ENCODE measurements at regions of chr14 and their contacts with region 1.

Region 1: GRCh38 chr14:74955229-74956026 is at the start of gene PGF:
- DNase-seq: peak; percentile 90
- total RNA-seq, gene PGF: 9.4 TPM

Region 2: DNA sequence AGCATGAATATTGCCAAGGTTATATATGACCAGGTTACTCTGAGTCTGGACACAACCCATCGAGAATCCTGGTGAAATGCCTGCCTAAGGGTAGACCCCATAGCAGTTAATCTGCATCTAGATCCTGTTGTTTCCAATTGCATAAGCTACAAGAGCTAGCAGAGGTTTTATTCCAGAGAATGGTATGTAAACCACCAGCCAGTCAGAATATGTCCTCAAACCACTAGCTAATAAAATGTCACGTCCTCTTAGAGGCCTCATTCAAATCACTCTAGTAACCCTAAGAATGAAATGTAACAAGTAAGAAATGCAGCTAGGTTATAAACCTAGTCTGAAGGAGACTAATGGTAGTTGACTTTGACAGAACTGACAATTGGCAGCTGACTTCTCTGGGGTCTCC is 201.3 kb before region 1 on chr14:
- intact Hi-C with region 1: no loop called
- DNase-seq: no peak

Region 3: GRCh38 chr14:74860906-74861733 is 94.3 kb before region 1 on chr14:
- intact Hi-C with region 1: no loop called
- DNase-seq: peak; percentile 94

Region 4: DNA sequence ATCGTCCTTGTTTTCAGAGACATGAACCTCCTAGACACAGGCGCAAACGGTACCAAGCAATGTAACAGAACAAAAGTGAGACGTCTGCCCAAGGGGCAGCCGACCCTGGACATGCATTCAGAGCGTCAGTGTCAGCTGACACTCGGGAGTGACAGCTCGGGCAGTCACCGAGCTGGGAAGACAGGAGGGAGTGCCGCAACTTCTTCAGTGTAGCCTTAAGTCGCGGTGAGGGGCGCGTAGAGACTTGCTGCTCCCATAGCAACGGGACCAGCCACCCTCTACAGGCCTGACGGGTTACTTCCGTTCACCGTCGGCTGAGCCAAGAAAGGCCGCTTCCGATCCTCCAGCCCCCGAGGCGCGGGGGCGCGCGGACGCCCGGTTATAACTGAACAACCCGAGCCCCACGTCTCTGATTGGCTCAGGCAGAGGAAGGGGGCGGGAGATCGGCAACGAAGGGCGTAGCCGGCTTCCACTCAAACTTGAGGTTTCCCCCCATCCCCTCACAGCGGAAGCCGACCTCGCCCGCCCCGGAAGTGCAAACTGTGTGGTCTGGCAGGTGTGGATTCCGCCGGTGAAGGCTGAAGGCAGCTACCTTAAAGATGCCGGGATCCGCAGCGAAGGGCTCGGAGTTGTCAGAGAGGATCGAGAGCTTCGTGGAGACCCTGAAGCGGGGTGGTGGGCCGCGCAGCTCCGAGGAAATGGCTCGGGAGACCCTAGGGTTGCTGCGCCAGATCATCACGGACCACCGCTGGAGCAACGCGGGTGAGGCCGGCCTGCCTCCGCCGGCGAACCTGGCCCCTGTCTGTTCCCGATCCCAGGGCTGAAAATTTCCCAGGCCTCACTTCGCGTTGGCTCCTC is 47.2 kb after region 1 on chr14 and contains the start of gene EIF2B2:
- intact Hi-C with region 1: loop called (anchors 10 kb)
- DNase-seq: peak; percentile 97
- total RNA-seq, gene EIF2B2: 36.4 TPM

Measured in cardiac septum (tissue), 1 donor.